H1 (cell line): ENCODE measurements at regions of chr13 and their contacts with region 1.

Region 1: GRCh38 chr13:39144941-39145533 is 106.8 kb downstream of the NHLRC3 start:
- DNase-seq: peak; percentile 31 to 55
- H3K4me3 ChIP-seq: no peak overlapping the region
- H3K27ac ChIP-seq: no peak overlapping the region
- H3K4me1 ChIP-seq: peaks cover 0 to 4% (median 0%) of the 10 kb centered on the region in 4 experiments; a peak in 2 of 7 replicates
- H3K27me3 ChIP-seq: no peaks in the 10 kb centered on the region; a peak in 1 of 7 replicates
- CTCF ChIP-seq: peak; percentile 50 to 85 (median 70)
- EP300 ChIP-seq: no peak
- POLR2A ChIP-seq: no peak
- RAD21 ChIP-seq: peak; percentile 87 to 92

Region 2: DNA sequence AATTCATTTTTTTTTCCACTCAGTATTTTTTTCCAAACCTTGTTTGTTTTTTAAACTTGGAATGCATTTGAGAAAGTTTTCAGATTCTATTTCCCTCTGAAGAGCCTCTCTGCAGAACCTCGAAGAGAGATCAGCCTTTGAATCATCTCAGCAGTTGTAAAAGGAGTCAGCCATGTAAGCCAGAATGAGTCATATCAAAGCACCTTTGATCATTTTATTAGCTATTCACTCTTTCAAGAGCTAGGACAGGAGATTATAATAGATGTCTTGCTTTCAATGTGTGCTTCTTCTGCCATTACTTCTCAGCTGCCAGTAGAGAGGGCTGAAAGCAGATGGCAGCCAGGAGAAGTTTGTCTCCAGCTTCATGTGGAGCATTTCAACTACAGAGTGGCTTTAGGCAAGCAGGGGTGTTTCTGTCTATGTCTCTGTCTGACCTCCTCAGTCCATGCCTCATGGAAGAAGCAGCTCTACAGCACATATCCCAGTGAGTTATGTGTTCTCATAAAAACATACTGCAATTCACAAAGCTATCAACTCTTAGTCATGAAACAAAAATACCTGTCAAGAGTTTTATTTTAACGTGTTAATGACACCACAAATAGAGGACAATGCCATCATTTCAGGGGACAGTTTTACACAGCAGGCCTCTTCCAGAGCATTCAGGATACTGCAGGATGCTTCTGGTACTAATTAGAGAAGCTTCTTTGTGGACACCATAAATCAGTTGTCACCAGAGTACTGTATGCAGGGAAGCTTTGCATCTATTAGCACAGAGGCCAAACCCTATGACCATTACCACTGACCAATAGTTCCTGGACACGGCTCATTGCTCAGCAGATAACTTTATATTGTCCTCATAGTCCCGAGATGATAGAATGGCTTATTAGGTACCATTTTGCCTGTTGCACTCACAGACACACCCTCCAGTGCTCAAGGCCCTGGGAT is 12.5 kb before region 1 on chr13:
- CTCF ChIA-PET with region 1: interaction called, 25 read pairs
- POLR2A ChIA-PET with region 1: no interaction called
- DNase-seq: no peak
- H3K4me3 ChIP-seq: no peak overlapping the region
- H3K27ac ChIP-seq: no peak overlapping the region
- H3K4me1 ChIP-seq: peaks cover 0 to 4% (median 3%) of the 10 kb centered on the region in 4 experiments; a peak in 4 of 7 replicates
- H3K27me3 ChIP-seq: no peaks in the 10 kb centered on the region
- CTCF ChIP-seq: no peak
- EP300 ChIP-seq: no peak
- POLR2A ChIP-seq: no peak
- RAD21 ChIP-seq: no peak

Region 3: DNA sequence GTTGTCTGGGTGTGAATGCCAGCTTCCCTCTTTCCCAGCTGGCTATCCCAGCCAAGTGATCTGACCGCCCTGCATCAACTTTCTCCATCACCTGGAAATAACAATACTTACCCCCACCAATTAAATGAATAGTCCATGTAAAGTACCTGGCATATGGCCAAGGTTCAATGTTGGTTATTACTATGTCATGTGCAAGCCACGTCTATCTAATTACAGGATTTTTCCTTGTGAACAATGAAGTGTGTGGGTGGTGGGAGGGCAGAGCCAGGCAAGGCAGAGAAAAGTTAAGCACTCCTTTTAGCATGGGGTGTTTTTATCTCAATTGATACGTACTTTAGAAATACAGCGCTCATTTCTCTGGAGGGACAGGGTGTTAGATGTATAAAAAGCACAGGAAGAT is 14.4 kb after region 1 on chr13:
- CTCF ChIA-PET with region 1: interaction called, 50 read pairs
- POLR2A ChIA-PET with region 1: no interaction called
- DNase-seq: no peak
- H3K4me3 ChIP-seq: no peak overlapping the region
- H3K27ac ChIP-seq: no peak overlapping the region
- H3K4me1 ChIP-seq: no peaks in the 10 kb centered on the region
- H3K27me3 ChIP-seq: no peaks in the 10 kb centered on the region
- CTCF ChIP-seq: no peak
- EP300 ChIP-seq: no peak
- POLR2A ChIP-seq: no peak
- RAD21 ChIP-seq: no peak

Region 4: GRCh38 chr13:39263033-39263432 is 118.0 kb after region 1 on chr13:
- CTCF ChIA-PET with region 1: interaction called, 17 read pairs
- POLR2A ChIA-PET with region 1: no interaction called
- DNase-seq: peak in 1 of 2 experiments; percentile 67
- H3K4me3 ChIP-seq: no peak overlapping the region
- H3K27ac ChIP-seq: no peak overlapping the region
- H3K4me1 ChIP-seq: no peaks in the 10 kb centered on the region
- H3K27me3 ChIP-seq: no peaks in the 10 kb centered on the region
- CTCF ChIP-seq: peak in 2 of 3 experiments; percentile 71 to 84; a peak in 3 of 4 replicates
- EP300 ChIP-seq: no peak
- POLR2A ChIP-seq: no peak
- RAD21 ChIP-seq: peak; percentile 80 to 81